ENCODE measurements at regions of chr19 and their contacts with region 1.

Region 1: DNA sequence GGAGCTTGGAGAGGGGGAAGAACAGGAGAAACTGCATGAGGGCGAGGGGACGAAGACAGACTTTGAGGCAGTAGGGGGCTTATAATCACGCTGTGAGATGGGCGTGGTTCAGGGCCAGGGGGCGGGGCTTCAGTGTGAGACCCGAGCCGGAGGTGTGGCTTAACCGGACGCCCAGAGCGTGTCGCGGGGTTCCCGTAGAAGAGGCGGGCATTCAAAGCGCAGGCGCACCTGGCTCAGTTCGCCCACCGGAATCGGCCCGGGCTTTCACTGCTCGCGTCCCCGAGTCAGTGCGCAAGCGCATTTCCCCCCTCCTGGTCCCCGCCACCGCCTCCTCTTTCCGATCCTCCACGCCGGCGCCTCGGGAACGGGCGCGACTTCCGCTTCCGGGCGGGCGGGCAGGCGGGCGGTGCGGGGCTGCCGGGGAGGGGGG is 225 bp upstream of the ZNF865 start:
- DNase-seq: peak; percentile 100
- H3K4me3 Mint-ChIP-seq: peak overlapping the region; percentile 80
- H3K27ac Mint-ChIP-seq: peak overlapping the region; percentile 96
- H3K4me1 Mint-ChIP-seq: peaks cover 49% of the 10 kb centered on the region
- H3K27me3 Mint-ChIP-seq: no peaks in the 10 kb centered on the region

Region 2: DNA sequence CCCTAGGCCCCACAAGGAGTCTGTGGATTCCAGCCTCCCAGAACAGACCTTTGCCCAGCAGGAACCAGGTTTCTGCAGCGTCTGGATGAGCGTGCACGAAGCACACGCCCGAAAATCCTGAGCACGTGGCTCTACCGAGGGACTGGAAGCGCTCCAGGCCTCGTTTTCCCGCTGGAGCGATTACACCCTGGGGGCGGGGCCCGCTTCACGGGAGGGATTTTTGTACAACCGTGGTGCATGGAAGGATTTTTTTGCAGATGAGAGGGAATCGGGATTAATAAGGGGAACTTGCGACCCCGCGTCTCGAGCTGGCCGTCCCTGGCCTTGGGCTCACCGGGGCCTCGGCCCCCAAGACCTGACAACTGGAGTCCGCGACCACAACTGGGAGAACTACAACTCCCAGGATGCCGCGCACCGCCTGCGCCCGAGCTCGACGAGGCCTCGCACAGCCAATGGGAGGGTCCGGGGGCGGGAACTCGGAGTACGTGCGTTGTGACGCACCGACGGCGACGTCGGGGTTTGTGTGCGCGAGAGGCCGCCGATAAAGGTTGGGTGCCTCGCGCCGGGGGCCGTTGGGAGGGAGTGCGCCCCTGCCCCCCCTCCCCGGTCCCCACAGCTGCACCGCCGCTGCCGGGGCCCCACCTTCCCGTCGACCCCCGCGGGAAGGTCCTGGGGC is 129.0 kb before region 1 on chr19 and contains the start of gene ZNF628:
- CTCF ChIA-PET with region 1: interaction called, 4 read pairs
- POLR2A ChIA-PET with region 1: no interaction called
- intact Hi-C with region 1: loop called (anchors 5 kb)
- DNase-seq: peak; percentile 99
- H3K4me3 Mint-ChIP-seq: peak within 1 kb of the TSS; percentile 88
- H3K27ac Mint-ChIP-seq: peak within 1 kb of the TSS; percentile 91
- H3K4me1 Mint-ChIP-seq: peaks cover 19% of the 10 kb centered on the region
- H3K27me3 Mint-ChIP-seq: no peaks in the 10 kb centered on the region
- total RNA-seq, gene ZNF628: 5.8 to 6.9 TPM

Region 3: DNA sequence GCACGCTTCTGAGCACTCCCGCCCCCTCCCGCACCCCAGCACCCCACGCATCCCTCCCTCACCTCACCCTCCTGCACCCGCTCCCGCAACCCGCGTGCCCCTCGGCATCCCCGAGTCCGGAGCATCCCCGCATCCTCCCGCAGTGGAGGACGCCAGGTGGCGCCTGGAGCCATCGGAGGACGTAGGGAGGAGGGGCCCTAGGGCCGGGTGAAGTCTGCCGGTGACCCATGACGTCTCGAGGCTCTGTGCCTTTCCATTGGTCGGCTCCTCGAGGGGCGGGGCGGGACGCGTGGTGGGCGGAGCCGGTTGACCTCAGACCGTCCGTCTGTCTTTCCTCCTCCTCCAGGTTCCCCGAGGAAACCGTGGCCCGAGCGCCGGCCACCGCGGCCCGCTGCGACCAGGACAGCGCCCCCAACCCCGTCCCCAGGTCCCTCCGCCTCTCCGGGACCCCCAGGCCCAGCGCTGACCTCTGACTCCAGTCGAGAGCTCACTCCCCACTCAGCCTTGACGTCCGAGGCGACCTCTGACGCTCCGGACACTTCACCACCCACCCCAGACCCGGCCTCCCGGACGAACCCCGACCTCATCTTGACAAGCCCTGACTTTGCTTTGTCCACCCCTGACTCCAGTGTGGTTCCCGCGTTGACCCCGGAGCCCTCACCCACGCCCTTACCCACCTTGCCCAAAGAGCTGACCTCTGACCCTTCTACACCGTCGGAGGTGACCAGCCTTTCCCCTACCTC is 88.2 kb before region 1 on chr19:
- CTCF ChIA-PET with region 1: interaction called, 14 read pairs
- POLR2A ChIA-PET with region 1: no interaction called
- intact Hi-C with region 1: loop called (anchors 1 kb)
- DNase-seq: peak; percentile 93
- H3K4me3 Mint-ChIP-seq: peak overlapping the region; percentile 64
- H3K27ac Mint-ChIP-seq: no peak overlapping the region
- H3K4me1 Mint-ChIP-seq: peaks cover 3% of the 10 kb centered on the region
- H3K27me3 Mint-ChIP-seq: peaks cover 11% of the 10 kb centered on the region

Region 4: GRCh38 chr19:55580628-55581144 is 24.5 kb before region 1 on chr19 and contains the start of gene ZNF579:
- CTCF ChIA-PET with region 1: interaction called, 10 read pairs
- POLR2A ChIA-PET with region 1: interaction called, 3 read pairs
- intact Hi-C with region 1: no loop called
- DNase-seq: peak; percentile 88
- H3K4me3 Mint-ChIP-seq: peak within 1 kb of the TSS; percentile 76
- H3K27ac Mint-ChIP-seq: peak within 1 kb of the TSS; percentile 78
- H3K4me1 Mint-ChIP-seq: peaks cover 23% of the 10 kb centered on the region
- H3K27me3 Mint-ChIP-seq: no peaks in the 10 kb centered on the region
- total RNA-seq, gene ZNF579: 6.6 to 6.7 TPM

Region 5: DNA sequence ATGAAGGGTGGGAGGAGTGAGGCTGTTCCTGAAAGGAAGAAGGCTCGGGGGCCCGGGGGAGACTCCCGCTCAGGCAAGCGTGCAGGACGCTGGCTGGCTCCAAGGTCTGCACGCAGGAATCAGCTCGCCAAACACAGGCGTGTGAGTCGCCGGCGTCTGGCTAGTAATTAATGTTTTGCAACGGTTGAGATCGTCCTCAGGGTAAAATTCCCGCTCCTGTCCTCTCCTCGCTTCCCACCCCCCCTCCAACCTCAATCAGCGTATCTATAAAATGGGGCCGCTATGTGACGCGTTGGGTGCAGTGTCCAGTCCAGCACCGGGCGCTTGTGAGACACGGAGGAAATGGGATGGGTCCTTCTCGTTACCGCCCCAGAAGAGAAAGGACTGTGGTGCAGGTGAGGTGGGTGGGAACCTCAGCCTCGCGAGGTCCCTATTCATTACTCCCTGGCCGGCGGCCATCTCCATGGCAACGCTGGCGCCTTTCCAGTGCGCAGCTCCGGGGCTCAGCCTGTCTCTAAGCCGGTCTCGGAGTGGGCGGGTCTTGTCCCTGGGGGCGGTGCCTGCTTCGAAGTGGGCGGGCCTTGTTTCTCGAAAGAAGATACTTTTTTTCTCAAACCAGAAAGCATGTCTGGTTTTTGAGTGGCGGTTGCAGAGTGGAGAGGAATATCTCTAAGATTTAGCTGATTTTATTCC is 18.1 kb before region 1 on chr19:
- CTCF ChIA-PET with region 1: interaction called, 10 read pairs
- POLR2A ChIA-PET with region 1: no interaction called
- intact Hi-C with region 1: no loop called
- DNase-seq: peak; percentile 96
- H3K4me3 Mint-ChIP-seq: peak overlapping the region; percentile 75
- H3K27ac Mint-ChIP-seq: no peak overlapping the region
- H3K4me1 Mint-ChIP-seq: peaks cover 19% of the 10 kb centered on the region
- H3K27me3 Mint-ChIP-seq: no peaks in the 10 kb centered on the region

Region 6: GRCh38 chr19:55624109-55625003 is 19.1 kb after region 1 on chr19 and contains the start of gene ZNF784:
- CTCF ChIA-PET with region 1: interaction called, 22 read pairs
- POLR2A ChIA-PET with region 1: interaction called, 11 read pairs
- intact Hi-C with region 1: loop called (anchors 1 kb)
- DNase-seq: peak; percentile 94
- H3K4me3 Mint-ChIP-seq: peak within 1 kb of the TSS; percentile 83
- H3K27ac Mint-ChIP-seq: peak within 1 kb of the TSS; percentile 94
- H3K4me1 Mint-ChIP-seq: peaks cover 46% of the 10 kb centered on the region
- H3K27me3 Mint-ChIP-seq: no peaks in the 10 kb centered on the region
- total RNA-seq, gene ZNF784: 3.9 to 4.4 TPM

Region 7: DNA sequence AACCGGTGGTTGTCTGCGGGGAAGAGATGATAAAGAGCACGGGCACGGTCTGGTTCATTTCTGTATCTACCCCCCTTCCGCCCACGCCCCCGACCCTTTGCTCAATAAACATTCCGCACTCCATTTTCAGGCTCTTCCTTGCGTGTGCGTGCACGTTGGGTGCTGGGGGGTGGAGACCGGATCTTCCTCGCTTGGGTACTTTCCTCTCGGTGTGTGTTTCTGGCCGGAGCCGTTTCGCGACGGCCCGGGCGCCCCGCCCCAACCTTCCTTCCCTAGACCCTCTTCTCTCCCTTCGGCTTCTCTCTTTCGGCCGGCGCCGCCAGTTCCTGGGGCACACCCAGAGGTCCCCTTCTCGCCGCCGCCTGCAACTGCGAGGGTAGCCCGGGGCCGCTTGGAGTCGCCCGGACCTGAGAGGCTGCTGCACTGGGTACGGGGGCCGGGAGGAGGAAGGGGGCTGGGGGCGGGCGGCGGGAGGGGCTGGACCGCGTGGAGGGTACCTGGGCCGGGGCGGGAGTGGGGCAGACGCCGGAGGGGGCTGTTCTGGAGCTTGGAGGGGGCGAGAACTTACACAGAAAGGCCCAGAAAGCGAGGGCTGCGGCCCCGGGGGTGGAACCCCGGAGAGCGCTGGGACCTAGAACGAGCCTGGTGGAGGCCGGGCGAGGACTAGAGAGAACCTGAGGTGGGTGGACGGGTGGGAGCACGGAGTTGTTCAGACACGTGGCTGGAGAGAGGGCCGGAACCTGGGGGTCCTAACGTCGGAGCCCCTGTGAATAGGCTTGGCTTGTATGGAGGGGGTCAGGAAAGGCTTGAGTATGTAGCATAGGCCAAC is 38.3 kb after region 1 on chr19 and contains the start of gene ZNF581:
- CTCF ChIA-PET with region 1: interaction called, 6 read pairs
- POLR2A ChIA-PET with region 1: interaction called, 3 read pairs
- intact Hi-C with region 1: loop called (anchors 2 kb)
- DNase-seq: peak; percentile 90
- H3K4me3 Mint-ChIP-seq: peak within 1 kb of the TSS; percentile 85
- H3K27ac Mint-ChIP-seq: peak within 1 kb of the TSS; percentile 98
- H3K4me1 Mint-ChIP-seq: peaks cover 46% of the 10 kb centered on the region
- H3K27me3 Mint-ChIP-seq: no peaks in the 10 kb centered on the region
- total RNA-seq, gene ZNF581: 19.2 to 20.1 TPM

Measured in activated CD4-positive, alpha-beta memory T cell treated with anti-CD3 and anti-CD28 coated beads for 36 hours (primary cell).